Head of caudate nucleus (tissue), 42 donors: ENCODE measurements at regions of chr2 and their contacts with region 1.

Region 1: GRCh38 chr2:62410015-62410453 is 96.0 kb downstream of the TMEM17 start:
- DNase-seq: peak in 38 of 42 donors; percentile 11 to 74 (median 50)

Region 2: DNA sequence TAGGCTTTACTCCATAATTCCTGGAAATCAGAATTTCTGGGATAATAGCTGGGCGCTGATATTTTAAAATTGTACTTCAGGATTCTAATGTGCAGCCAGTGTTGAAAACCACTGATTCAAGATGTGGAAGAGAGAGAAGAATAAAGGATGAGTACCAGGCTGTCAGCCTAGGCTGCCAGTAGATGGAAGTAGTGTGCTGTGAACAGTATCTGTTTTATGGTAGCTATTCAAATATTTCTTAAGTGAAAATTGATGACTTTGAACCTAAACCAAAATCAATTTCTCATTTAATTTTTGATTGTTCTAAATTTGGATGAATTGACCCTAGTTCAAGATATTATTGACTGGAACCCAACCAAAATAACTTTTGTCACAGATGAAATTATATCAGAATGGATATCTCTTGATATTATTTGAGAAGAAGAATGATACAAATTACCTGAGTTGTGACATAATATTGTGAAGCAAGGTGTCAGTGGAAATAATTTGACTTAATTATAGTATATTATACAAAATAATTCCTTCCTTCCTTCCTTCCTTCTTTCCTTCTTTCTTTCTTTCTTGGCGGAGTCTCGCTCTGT is 416.5 kb before region 1 on chr2:
- intact Hi-C with region 1: loop called (anchors 2 kb)
- DNase-seq: peak in 21 of 42 donors; percentile 21 to 63 (median 44)

Region 3: GRCh38 chr2:62195421-62196277 is 214.4 kb before region 1 on chr2 and contains the start of gene B3GNT2:
- intact Hi-C with region 1: loop called (anchors 5 kb)
- DNase-seq: peak; percentile 53 to 94 (median 87)

Region 4: DNA sequence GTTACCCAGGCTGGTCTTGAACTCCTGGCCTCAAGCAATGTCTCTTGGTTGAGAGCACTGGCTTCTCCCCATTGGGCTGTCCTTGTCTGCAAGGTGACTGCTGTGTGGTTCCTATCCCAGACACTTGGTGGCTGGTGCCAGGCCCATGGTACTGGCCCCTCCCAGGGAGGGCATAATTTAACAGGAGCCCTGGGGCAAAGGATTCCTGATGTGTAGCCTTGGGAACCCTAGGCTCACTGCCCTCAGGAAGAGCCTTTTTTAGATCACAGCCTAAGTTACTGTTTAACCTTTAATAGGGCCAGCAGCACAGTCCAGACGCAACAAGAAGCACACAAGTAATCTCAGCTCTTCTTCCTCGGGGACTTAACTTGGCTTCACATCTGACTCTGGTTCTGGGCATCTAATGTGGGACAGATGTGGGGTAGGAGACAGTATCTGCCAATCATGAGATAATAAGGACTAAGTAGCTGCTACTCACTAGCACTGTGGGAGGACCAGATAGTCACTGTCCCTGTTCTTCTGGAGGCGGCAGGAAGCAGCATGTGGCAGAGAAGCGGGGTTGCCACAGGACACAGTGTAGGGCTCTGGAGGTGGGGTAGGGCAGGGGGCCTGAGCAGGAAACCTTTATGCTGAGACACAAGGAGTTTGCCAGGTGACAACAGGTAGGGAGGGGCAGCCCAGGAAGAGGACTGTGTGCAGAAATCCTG is 40.4 kb before region 1 on chr2:
- intact Hi-C with region 1: no loop called
- DNase-seq: no peak

Region 5: DNA sequence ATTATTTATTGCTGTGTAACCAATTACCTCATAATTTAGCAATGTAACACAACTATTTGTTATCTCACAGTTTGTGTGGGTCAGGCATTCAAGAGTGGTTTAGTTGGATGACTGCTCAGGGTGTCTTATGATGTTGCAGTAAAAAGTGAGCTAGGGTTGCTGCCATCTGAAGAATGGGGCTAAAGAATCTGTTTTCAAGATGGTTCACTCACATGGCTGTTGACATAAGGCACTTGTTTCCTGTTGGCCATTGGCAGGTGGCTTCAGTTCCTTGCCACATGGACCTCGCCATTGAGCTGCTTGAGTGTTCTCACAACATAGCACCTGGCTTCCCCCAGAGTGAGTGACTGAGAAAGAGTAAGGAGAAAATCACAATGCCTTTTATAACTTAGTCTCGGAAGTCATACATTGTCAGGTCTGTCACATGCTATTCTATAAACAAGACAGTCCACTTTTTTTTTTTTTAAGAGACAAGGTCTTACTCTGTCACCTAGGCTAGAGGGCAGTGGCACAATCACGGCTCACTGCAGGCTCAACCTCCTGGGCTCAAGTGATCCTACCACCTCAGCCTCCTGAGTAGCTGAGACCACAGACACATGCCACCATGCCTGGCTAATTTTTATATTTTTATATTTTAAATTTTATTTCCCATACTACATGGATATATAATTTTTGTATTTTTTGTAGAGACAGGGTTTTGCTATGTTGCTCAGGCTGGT is 27.1 kb before region 1 on chr2:
- intact Hi-C with region 1: no loop called
- DNase-seq: no peak